Breast epithelium (tissue), 4 donors: ENCODE measurements at regions of chr6 and their contacts with region 1.

Region 1: DNA sequence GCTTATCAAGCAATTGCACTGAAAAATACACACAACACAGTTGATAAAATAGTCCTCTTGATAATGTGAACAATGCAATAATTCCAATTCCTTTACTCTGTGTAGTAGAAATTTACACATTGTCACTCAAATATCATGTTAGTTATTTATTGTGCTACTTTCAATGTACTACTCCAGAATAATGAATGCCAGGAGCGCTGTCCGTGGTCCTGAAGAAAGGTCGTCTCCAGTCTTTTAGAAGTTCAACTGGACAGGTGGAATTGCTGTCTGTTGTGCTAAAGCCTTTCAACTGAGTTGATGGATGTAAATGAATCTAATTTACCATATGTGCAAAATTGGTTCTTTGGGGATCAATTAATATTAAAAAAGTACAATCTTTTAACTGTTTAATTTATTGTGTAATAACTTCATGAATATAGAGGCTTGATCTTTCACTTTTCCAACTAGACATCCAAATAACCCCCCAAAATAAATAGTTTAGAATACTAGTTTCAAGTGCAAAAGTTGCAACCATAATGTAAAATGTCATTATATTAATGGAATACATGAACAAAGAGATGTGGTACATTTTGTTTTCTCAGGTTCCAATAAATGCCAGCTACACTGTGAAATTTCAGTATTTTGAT is 3.2 kb downstream of the GRIK2 start:
- DNase-seq: no peak
- H3K4me3 ChIP-seq: no peak overlapping the region
- H3K27ac ChIP-seq: no peak overlapping the region
- H3K4me1 ChIP-seq: no peaks in the 10 kb centered on the region
- H3K27me3 ChIP-seq: peaks cover 0 to 39% of the 10 kb centered on the region in 2 donors
- CTCF ChIP-seq: no peak
- POLR2A ChIP-seq: no peak

Region 2: DNA sequence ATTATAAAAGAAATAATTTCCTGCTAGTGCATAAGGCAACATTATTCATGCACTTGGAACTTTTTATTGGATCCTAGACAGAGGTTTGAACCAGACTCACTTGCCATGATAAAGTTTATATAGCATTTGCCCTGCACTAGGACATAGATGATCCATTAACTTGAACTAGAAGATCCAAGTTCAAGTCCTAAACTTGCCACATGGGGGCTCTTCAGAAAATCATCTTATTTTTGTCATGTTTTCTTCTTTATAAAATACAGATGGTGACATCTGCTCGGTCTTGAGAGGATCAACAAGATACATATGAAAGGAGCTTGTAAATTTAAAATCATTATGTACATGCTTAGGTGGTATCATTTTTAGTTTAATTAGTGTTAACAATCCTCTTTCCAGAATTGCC is 1026.4 kb before region 1 on chr6:
- intact Hi-C with region 1: loop called (anchors 5 kb)
- DNase-seq: no peak
- H3K4me3 ChIP-seq: no peak overlapping the region
- H3K27ac ChIP-seq: no peak overlapping the region
- H3K4me1 ChIP-seq: no peaks in the 10 kb centered on the region
- H3K27me3 ChIP-seq: no peaks in the 10 kb centered on the region
- CTCF ChIP-seq: no peak
- POLR2A ChIP-seq: no peak